ENCODE measurements at regions of chr5 and their contacts with region 1.

Region 1: DNA sequence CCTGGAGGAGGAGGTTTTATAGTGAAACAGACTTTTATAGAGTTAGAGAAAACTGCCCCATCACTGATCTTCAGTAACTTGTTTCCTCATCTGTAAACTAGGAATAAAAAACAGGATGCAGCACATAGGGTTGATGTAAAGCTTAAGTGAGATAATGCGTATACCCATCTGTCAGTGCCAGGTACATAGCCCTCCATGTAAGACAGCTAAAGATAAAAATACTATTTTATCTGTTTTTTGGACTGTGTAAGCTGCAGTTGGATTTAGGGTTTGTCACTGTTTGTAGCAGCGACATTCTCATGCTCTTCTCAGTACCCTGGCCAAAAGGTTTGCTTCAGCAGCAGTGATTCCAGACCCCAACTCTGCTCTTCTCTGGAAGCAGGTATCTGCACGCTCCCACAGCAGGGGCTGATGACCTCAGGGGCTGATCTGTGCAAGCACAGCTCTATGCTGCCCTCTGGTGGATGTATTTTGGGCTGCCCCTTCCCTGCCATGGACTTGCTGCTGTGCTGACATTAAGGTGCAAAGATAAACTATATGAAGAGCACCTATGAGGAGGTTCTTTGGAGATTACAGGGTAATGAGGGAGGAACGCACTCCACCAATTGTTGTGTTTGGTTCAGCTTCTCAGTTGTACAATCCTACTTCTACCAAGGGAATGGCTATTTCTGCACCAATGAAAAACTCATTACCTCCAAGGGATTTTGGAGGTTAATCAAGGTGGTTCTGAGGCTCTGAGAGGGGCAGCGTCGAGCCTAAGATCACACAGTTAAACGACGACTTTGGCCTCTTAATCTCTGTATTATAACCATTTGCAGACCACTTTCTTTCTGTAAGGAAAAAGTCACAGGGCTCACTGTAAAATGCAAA is 13.1 kb downstream of the HMHB1 start:
- DNase-seq: peak; percentile 77 to 85 (median 84)
- ATAC-seq: peak; percentile 65 to 98 (median 96)
- H3K4me3 ChIP-seq: no peak overlapping the region
- H3K27ac ChIP-seq: no peak overlapping the region
- H3K4me1 ChIP-seq: peaks cover 0 to 12% (median 3%) of the 10 kb centered on the region in 12 donors
- H3K27me3 ChIP-seq: no peaks in the 10 kb centered on the region
- CTCF ChIP-seq: peak; percentile 91 to 99 (median 96)
- POLR2A ChIP-seq: no peak

Region 2: GRCh38 chr5:142713121-142713706 is 1111.9 kb before region 1 on chr5:
- intact Hi-C with region 1: loop called in 1 of 10 experiments (anchors 10 kb)
- DNase-seq: peak; percentile 88 to 94 (median 91)
- ATAC-seq: peak; percentile 60 to 88 (median 86)
- H3K4me3 ChIP-seq: peak overlapping the region in 11 of 12 donors; percentile 31 to 63 (median 56)
- H3K27ac ChIP-seq: peak overlapping the region; percentile 63 to 96 (median 88)
- H3K4me1 ChIP-seq: peaks cover 0 to 46% (median 25%) of the 10 kb centered on the region in 12 donors
- H3K27me3 ChIP-seq: no peaks in the 10 kb centered on the region
- CTCF ChIP-seq: peak; percentile 91 to 99 (median 97)
- POLR2A ChIP-seq: peak in 1 of 2 donors; percentile 27

Region 3: GRCh38 chr5:142922223-142922952 is 902.7 kb before region 1 on chr5:
- intact Hi-C with region 1: loop called in 7 of 10 experiments (anchors 5 to 10 kb)
- DNase-seq: no peak
- ATAC-seq: peak in 2 of 4 donors; percentile 44 to 53
- H3K4me3 ChIP-seq: no peak overlapping the region
- H3K27ac ChIP-seq: peak overlapping the region in 8 of 12 donors; percentile 21 to 63 (median 44)
- H3K4me1 ChIP-seq: peaks cover 4 to 57% (median 43%) of the 10 kb centered on the region in 12 donors
- H3K27me3 ChIP-seq: no peaks in the 10 kb centered on the region
- CTCF ChIP-seq: peak; percentile 27 to 72 (median 52)
- POLR2A ChIP-seq: no peak

Region 4: GRCh38 chr5:143016777-143017516 is 808.1 kb before region 1 on chr5:
- intact Hi-C with region 1: loop called in 3 of 10 experiments (anchors 5 to 10 kb)
- DNase-seq: peak in 1 of 5 donors; percentile 42
- ATAC-seq: peak in 1 of 4 donors; percentile 31
- H3K4me3 ChIP-seq: no peak overlapping the region
- H3K27ac ChIP-seq: no peak overlapping the region
- H3K4me1 ChIP-seq: peaks cover 0 to 17% (median 6%) of the 10 kb centered on the region in 12 donors
- H3K27me3 ChIP-seq: no peaks in the 10 kb centered on the region
- CTCF ChIP-seq: peak; percentile 15 to 62 (median 34)
- POLR2A ChIP-seq: no peak

Region 5: GRCh38 chr5:143106174-143106573 is 718.9 kb before region 1 on chr5:
- intact Hi-C with region 1: loop called in 7 of 10 experiments (anchors 10 kb)
- DNase-seq: peak in 4 of 5 donors; percentile 38 to 56 (median 50)
- ATAC-seq: peak; percentile 53 to 86 (median 68)
- H3K4me3 ChIP-seq: no peak overlapping the region
- H3K27ac ChIP-seq: no peak overlapping the region
- H3K4me1 ChIP-seq: peaks cover 0 to 66% (median 43%) of the 10 kb centered on the region in 12 donors
- H3K27me3 ChIP-seq: no peaks in the 10 kb centered on the region
- CTCF ChIP-seq: peak in 10 of 12 donors; percentile 8 to 55 (median 36)
- POLR2A ChIP-seq: no peak

Region 6: DNA sequence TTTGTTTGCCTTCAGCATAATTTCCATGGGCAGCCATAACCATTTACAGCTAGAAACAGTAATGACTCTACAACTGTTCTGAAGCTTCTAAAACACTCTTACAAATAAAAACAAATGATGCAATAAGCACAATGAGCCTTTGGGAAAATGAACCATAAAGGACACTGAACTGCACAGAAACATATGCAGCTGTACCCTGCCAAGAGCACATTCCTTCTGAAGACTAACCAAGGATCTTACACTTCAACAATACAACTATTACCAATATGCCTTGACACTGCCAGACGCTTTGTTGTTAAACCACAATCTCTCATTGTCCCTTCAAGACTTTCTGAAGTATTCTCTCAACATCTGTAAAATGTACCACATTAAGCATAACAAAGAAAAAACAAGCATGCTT is 117.3 kb before region 1 on chr5:
- intact Hi-C with region 1: loop called in 1 of 10 experiments (anchors 10 kb)
- DNase-seq: no peak
- ATAC-seq: no peak
- H3K4me3 ChIP-seq: no peak overlapping the region
- H3K27ac ChIP-seq: no peak overlapping the region
- H3K4me1 ChIP-seq: peaks cover 0 to 14% (median 2%) of the 10 kb centered on the region in 12 donors
- H3K27me3 ChIP-seq: no peaks in the 10 kb centered on the region
- CTCF ChIP-seq: no peak
- POLR2A ChIP-seq: no peak